Activated CD4-positive, alpha-beta memory T cell treated with anti-CD3 and anti-CD28 coated beads, Interleukin-2, amount 10 ng/mL, durations not matched to agents 7 days and 5 days (primary cell): ENCODE measurements at regions of chr5 and their contacts with region 1.

Region 1: GRCh38 chr5:157271740-157272271 is 5.9 kb downstream of the CYFIP2 start:
- DNase-seq: peak; percentile 94
- H3K4me3 Mint-ChIP-seq: peak overlapping the region; percentile 78
- H3K27ac Mint-ChIP-seq: peak overlapping the region; percentile 100
- H3K4me1 Mint-ChIP-seq: peaks cover 86% of the 10 kb centered on the region
- H3K27me3 Mint-ChIP-seq: no peaks in the 10 kb centered on the region

Region 2: GRCh38 chr5:156991714-156992113 is 280.1 kb before region 1 on chr5:
- CTCF ChIA-PET with region 1: no interaction called
- POLR2A ChIA-PET with region 1: no interaction called
- DNase-seq: no peak
- H3K4me3 Mint-ChIP-seq: no peak overlapping the region
- H3K27ac Mint-ChIP-seq: no peak overlapping the region
- H3K4me1 Mint-ChIP-seq: no peaks in the 10 kb centered on the region
- H3K27me3 Mint-ChIP-seq: peaks cover 26% of the 10 kb centered on the region

Region 3: DNA sequence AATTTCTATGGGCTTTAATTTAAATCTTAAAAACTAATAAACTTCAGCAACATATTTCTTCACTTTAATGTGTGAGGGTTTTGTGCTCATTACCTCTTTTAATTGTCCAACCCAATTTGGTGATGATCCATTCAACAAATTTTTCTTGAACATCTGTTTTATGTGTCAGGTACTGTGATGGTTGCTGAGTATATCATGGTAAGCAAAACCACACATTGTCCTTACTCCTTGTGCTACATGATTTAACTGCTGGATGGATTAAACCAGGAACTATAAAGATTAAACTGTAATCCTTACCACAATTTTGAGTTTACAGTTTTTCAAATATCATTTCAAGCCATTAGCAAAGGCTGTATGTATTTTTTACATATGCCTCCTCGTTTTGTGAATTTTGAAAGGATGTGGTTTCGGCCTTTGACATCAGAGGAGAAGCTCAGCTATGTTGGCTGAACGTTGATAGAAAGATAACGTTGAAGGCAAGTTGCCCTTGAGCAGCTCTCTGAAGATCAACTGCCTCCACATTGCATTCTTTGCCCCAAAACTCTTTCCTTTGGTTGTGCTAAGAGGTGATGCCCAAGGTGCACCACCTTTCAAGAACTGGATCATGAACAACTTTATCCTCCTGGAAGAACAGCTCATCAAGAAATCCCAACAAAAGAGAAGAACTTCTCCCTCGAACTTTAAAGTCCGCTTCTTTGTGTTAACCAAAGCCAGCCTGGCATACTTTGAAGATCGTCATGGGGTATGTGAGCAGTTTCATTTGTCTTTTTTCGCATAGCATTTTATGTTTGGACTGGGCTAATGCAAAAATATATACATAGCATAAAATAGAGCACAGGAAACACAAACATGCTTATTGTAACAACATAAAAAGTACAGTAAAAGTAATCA is 91.2 kb before region 1 on chr5 and contains the start of gene ITK:
- CTCF ChIA-PET with region 1: no interaction called
- POLR2A ChIA-PET with region 1: interaction called, 33 read pairs
- DNase-seq: peak; percentile 67
- H3K4me3 Mint-ChIP-seq: peak within 1 kb of the TSS; percentile 94
- H3K27ac Mint-ChIP-seq: peak within 1 kb of the TSS; percentile 99
- H3K4me1 Mint-ChIP-seq: peaks cover 49% of the 10 kb centered on the region
- H3K27me3 Mint-ChIP-seq: no peaks in the 10 kb centered on the region
- total RNA-seq, gene ITK: 247 to 249 TPM

Region 4: DNA sequence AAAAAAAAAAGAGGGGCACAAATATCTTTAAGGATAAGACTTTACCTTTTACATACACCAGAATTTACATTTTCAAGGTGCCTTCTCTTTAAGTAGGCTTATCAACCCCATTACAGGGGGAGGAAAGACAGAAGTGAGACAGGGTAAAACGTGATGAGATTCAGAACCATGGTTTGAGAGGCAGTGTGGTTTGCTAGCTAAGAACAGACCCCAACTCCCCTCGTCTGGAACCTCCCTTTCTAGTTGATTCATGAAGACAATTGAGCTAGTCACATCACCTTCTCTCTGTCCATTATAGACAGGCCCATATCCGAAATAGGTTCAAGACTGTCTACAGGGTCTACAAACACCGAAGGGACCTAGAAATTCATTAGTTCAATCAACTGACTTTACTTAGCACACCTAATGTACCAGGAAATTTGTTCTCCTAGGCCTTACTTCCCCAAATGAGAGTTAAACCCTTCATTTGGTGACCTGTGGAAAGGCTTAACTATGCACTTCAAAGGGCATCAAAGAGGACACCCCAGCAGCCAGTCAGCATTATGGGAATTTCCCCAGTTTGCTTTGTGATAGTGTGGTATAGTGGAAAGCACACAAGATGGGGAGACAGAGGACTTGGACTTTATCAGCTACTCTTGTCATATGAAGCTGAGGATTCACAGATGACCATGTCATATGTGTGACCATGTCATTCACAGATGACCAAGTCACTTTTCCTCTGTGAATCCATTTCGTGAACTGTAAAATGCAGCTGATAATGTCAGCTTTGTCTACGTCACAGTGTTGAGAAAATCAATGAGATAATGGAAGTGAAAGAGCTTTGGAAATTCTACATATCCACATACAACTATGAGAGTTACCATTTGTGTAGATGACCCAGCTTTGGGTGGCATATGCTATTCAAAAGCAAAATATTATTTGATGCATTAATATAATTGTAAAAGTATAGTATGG is 46.1 kb before region 1 on chr5:
- CTCF ChIA-PET with region 1: interaction called, 5 read pairs
- POLR2A ChIA-PET with region 1: interaction called, 14 read pairs
- DNase-seq: no peak
- H3K4me3 Mint-ChIP-seq: peak overlapping the region; percentile 26
- H3K27ac Mint-ChIP-seq: peak overlapping the region; percentile 69
- H3K4me1 Mint-ChIP-seq: peaks cover 72% of the 10 kb centered on the region
- H3K27me3 Mint-ChIP-seq: no peaks in the 10 kb centered on the region

Region 5: DNA sequence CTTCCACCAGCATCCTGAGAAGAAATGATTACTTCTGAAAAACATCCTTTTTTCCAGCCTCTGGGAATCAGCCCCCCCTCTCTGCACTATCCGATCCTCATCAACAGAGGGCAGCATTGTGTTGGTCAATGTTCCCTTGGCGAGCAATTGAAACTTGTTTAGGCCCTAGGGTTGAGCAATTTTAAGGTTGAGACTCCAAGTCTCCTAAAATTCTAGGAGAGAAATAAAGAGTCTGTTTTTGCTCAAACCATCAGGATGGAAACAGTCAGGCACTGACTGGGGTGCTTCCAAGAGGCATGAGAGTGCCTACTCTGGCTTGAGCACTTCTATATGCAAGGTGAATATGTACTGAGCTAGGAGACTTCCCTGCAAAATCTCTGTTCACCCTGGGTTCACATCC is 18.3 kb before region 1 on chr5:
- CTCF ChIA-PET with region 1: interaction called, 24 read pairs
- POLR2A ChIA-PET with region 1: interaction called, 145 read pairs
- DNase-seq: no peak
- H3K4me3 Mint-ChIP-seq: peak overlapping the region; percentile 19
- H3K27ac Mint-ChIP-seq: peak overlapping the region; percentile 96
- H3K4me1 Mint-ChIP-seq: peaks cover 92% of the 10 kb centered on the region
- H3K27me3 Mint-ChIP-seq: no peaks in the 10 kb centered on the region

Region 6: GRCh38 chr5:157295247-157295646 is 23.4 kb after region 1 on chr5:
- CTCF ChIA-PET with region 1: interaction called, 3 read pairs
- POLR2A ChIA-PET with region 1: interaction called, 30 read pairs
- DNase-seq: no peak
- H3K4me3 Mint-ChIP-seq: no peak overlapping the region
- H3K27ac Mint-ChIP-seq: peak overlapping the region; percentile 15
- H3K4me1 Mint-ChIP-seq: peaks cover 37% of the 10 kb centered on the region
- H3K27me3 Mint-ChIP-seq: no peaks in the 10 kb centered on the region